Prostate gland (tissue), 2 donors: ENCODE measurements at regions of chr12 and their contacts with region 1.

Region 1: DNA sequence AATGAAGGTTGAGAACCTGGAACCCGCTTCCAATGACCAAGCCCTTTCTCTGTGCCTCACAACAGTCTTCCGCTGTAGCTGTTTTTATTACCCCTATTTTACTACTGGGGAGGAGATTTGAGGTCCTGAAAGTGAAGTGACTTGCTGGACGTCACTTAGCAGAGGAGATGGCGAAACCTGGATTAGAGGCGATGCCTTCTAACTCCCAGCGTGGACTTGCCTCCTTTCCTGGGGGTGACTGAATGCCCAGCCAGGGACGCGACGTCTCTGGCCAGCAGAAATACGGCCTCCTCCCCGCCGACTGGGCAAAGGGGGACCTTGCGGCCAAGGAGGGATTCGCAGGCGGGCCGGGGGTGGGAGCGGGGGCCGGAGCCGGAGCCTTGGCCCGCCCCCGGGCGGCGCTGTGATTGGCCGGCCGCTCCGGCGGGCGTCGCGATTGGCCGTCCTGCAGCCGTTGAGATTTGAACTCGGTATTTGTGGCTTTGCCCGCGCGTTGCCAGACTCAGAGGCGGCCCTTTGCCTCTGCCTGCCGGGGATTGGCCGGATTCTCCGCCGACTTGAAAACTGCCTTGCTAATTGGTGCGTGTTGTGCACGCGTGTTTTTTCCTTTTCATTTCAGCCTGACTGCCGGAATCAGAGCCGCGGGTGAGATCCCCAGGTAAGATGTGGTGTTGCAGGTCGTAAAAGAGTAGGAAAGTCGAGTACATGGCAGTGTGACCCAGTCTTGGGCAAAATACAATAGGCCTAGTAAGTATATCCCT is at the start of gene NCAPD2:
- DNase-seq: peak; percentile 95
- H3K4me3 ChIP-seq: peak within 1 kb of the TSS; percentile 64 to 69
- H3K27ac ChIP-seq: peak within 1 kb of the TSS; percentile 94 to 96
- H3K4me1 ChIP-seq: no peaks in the 10 kb centered on the region
- H3K27me3 ChIP-seq: no peaks in the 10 kb centered on the region
- CTCF ChIP-seq: peak; percentile 17 to 69 (median 53)
- POLR2A ChIP-seq: peak; percentile 28
- total RNA-seq, gene NCAPD2: 86.7 to 99.0 TPM

Region 2: DNA sequence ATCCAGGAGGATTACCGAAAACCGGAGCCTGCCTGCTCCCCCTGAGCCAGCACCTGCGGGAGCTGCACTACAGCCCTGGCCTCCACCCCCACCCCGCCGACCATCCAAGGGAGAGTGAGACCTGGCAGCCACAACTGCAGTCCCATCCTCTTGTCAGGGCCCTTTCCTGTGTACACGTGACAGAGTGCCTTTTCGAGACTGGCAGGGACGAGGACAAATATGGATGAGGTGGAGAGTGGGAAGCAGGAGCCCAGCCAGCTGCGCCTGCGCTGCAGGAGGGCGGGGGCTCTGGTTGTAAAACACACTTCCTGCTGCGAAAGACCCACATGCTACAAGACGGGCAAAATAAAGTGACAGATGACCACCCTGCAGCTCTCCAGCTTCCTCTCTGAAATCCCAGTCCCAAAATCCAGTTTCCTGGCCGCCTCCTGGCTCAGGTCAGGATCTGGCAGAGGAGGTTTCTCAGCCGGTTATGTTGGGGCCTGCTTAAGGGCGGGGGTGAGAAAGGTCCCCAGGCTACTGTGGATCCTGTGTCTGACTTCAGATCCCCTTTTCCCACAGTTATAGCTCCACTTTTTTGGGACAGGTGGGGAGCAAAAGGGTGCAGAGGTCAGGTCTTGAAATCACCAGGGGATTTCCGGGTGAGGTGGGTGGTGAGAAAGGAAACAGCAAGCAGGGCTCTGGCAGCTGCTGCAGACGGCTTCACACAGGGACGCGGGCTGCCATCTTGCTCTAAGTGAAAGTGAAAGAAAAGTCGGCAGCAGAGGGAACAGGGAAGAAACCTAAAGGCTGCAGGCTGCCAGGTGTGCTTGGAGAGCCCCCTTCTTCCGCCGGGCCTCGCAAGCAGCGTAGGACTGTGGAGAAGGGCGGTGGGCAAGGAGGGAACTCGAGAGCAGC is 42.1 kb before region 1 on chr12 and contains the start of gene TAPBPL:
- intact Hi-C with region 1: loop called (anchors 5 kb)
- DNase-seq: peak; percentile 87
- H3K4me3 ChIP-seq: peak within 1 kb of the TSS; percentile 63
- H3K27ac ChIP-seq: peak within 1 kb of the TSS; percentile 96 to 99
- H3K4me1 ChIP-seq: peaks cover 20% of the 10 kb centered on the region
- H3K27me3 ChIP-seq: no peaks in the 10 kb centered on the region
- CTCF ChIP-seq: peak in 1 of 4 experiments; percentile 2
- POLR2A ChIP-seq: peak; percentile 59
- total RNA-seq, gene TAPBPL: 31.6 to 39.9 TPM

Region 3: GRCh38 chr12:6470375-6471163 is 23.1 kb before region 1 on chr12 and contains the start of gene VAMP1:
- intact Hi-C with region 1: no loop called
- DNase-seq: peak; percentile 98
- H3K4me3 ChIP-seq: peak within 1 kb of the TSS; percentile 57 to 86
- H3K27ac ChIP-seq: peak within 1 kb of the TSS; percentile 84 to 87
- H3K4me1 ChIP-seq: peaks cover 3% of the 10 kb centered on the region
- H3K27me3 ChIP-seq: no peaks in the 10 kb centered on the region
- CTCF ChIP-seq: peak in 2 of 4 experiments; percentile 29 to 42
- POLR2A ChIP-seq: peak; percentile 99
- total RNA-seq, gene VAMP1: 6.3 to 8.5 TPM